Mammary epithelial cell (primary cell): ENCODE measurements at regions of chr6 and their contacts with region 1.

Region 1: GRCh38 chr6:89432875-89433251 is at the start of gene ANKRD6:
- DNase-seq: peak; percentile 61
- H3K4me3 ChIP-seq: peak within 1 kb of the TSS; percentile 79 to 91 (median 84)
- H3K27ac ChIP-seq: peak within 1 kb of the TSS; percentile 4
- H3K4me1 ChIP-seq: peaks cover 22% of the 10 kb centered on the region
- H3K27me3 ChIP-seq: no peaks in the 10 kb centered on the region
- CTCF ChIP-seq: peak; percentile 65 to 79
- total RNA-seq, gene ANKRD6: 23.4 to 25.8 TPM

Region 2: DNA sequence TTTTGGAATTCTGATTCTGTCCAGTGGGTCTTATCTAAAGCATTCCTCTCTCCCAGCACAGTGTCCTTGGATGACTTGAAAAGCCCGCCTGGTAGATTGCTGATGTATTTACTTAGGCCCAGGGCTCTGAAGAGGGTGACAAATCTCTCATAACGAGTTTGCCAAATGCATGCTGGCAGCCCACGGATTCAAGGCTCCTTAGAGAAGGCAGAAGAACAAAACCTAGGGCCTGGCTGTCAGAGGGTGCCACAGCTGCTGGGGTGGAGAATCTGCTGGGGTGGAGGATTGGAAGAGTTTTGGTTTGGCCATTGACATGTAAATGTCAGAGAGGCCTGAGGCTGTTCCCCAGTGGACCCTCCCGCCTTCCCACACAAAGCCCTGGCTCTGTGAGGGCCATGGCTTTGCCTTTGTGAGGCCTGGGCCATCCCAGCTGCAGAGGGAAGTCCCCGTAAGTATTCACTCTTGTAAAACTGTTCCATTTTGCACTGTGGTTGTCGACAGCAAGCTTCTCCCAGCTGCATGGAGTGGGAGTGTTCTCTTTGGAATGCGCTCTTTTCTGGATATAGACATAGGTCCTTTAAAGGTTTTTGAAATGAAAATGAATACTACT is 50.4 kb after region 1 on chr6:
- CTCF ChIA-PET with region 1: no interaction called
- dilution Hi-C with region 1: no loop called
- in situ Hi-C with region 1: no loop called
- intact Hi-C with region 1: no loop called
- DNase-seq: no peak
- H3K4me3 ChIP-seq: no peak overlapping the region
- H3K27ac ChIP-seq: no peak overlapping the region
- H3K4me1 ChIP-seq: no peaks in the 10 kb centered on the region
- H3K27me3 ChIP-seq: no peaks in the 10 kb centered on the region
- CTCF ChIP-seq: no peak

Region 3: GRCh38 chr6:89597988-89598692 is 165.3 kb after region 1 on chr6:
- CTCF ChIA-PET with region 1: interaction called, 4 read pairs
- dilution Hi-C with region 1: no loop called
- in situ Hi-C with region 1: no loop called
- intact Hi-C with region 1: loop called (anchors 1 kb)
- DNase-seq: peak; percentile 76
- H3K4me3 ChIP-seq: no peak overlapping the region
- H3K27ac ChIP-seq: no peak overlapping the region
- H3K4me1 ChIP-seq: no peaks in the 10 kb centered on the region
- H3K27me3 ChIP-seq: no peaks in the 10 kb centered on the region
- CTCF ChIP-seq: peak; percentile 21 to 45

Region 4: GRCh38 chr6:89610149-89610642 is 177.3 kb after region 1 on chr6:
- CTCF ChIA-PET with region 1: interaction called, 3 read pairs
- dilution Hi-C with region 1: no loop called
- in situ Hi-C with region 1: loop called (anchors 5 kb)
- intact Hi-C with region 1: loop called (anchors 1 kb)
- DNase-seq: peak; percentile 21
- H3K4me3 ChIP-seq: no peak overlapping the region
- H3K27ac ChIP-seq: no peak overlapping the region
- H3K4me1 ChIP-seq: peaks cover 3% of the 10 kb centered on the region
- H3K27me3 ChIP-seq: no peaks in the 10 kb centered on the region
- CTCF ChIP-seq: peak; percentile 81 to 86

Region 5: DNA sequence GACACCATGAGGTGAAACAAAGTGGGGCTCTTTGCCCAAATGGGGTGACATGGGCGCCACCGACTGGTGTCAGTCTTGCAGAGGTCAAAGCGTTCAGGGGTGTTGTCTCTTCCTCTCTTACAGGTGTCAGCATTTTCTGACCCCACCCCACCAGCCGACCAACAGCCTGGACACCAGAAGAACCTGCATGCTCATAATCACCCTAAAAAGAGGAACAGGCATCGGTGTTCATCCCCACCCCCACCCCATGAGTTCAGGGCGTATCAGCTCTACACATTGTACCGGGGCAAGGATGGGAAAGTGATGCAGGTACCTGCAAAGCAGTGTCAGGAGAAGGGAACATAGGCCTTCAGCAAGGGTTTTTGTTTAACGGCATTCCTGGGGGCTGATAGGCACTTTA is 190.9 kb after region 1 on chr6:
- CTCF ChIA-PET with region 1: no interaction called
- dilution Hi-C with region 1: loop called (anchors 5 kb)
- in situ Hi-C with region 1: no loop called
- intact Hi-C with region 1: no loop called
- DNase-seq: no peak
- H3K4me3 ChIP-seq: no peak overlapping the region
- H3K27ac ChIP-seq: no peak overlapping the region
- H3K4me1 ChIP-seq: no peaks in the 10 kb centered on the region
- H3K27me3 ChIP-seq: no peaks in the 10 kb centered on the region
- CTCF ChIP-seq: no peak

Region 6: DNA sequence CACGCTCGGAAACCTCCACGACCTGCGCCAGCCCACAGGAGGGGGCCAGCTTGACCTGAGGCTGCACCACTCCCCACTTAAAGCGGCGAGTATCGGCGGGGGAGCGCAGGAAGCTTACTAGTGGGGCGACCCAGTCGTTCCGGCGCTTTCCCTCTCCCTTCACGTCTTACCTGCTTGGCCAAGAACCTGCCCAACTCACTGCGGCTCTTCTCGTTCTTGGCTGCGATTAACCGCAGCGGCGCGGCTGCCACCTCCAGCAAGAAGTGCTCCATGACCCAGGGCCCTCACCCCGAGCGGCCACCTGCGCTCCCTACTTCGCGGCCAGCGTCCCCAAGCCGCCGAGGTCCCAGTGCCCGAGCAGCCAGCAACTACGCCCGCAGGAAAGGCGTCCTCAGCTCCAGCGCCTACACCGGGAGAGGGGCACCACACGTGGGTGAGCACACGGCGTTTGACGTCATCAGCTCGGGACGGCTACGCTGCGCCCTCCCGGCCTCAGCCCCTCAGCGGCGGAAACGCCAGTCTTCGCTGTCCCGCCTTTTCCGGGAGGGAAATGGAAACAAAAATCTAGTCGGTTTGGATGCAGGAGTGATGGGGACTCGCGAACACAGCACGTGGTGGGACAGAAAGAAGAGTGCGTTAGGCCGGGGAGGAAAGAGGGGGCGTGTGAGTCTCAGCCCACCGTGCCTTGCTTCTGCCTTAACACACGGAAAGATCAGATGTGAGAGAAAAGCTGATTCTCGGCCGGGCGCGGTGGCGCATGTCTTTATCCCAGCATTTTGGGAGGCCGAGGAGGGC is 386.7 kb after region 1 on chr6 and contains the start of gene MDN1:
- CTCF ChIA-PET with region 1: no interaction called
- dilution Hi-C with region 1: no loop called
- in situ Hi-C with region 1: no loop called
- intact Hi-C with region 1: loop called (anchors 10 kb)
- DNase-seq: peak; percentile 95
- H3K4me3 ChIP-seq: peak within 1 kb of the TSS; percentile 92 to 100 (median 94)
- H3K27ac ChIP-seq: peak within 1 kb of the TSS; percentile 80
- H3K4me1 ChIP-seq: peaks cover 12% of the 10 kb centered on the region
- H3K27me3 ChIP-seq: no peaks in the 10 kb centered on the region
- CTCF ChIP-seq: no peak
- total RNA-seq, gene MDN1: 18.2 to 30.3 TPM